AG04449 (cell line): ENCODE measurements at regions of chr6 and their contacts with region 1.

Region 1: DNA sequence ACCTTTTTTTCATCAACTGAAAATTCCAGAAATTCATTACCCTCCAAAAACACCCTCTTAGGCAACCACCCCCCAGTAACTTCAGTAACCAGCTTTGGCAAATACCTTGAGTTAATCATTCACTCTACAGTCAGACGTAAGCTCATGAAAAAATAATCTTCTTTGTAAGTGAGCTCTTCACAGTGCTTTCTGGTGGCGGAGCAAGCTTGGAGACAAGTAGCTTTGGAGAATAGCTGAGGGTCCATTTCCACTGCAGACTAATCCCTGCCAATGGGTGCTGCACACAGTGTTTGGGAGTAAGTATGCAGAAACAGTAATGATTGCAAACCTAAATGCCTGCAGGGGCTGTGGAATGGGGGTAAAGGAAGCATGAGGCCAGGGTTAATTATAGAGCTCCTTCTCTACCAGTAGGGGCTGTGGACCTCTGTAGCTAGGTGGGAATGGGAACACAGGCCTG is 56.8 kb upstream of the HINT3 start:
- DNase-seq: no peak
- H3K4me3 ChIP-seq: no peak overlapping the region
- CTCF ChIP-seq: no peak

Region 2: GRCh38 chr6:125888989-125889656 is 10.6 kb before region 1 on chr6:
- CTCF ChIA-PET with region 1: interaction called, 11 read pairs
- POLR2A ChIA-PET with region 1: no interaction called
- DNase-seq: no peak
- H3K4me3 ChIP-seq: no peak overlapping the region
- CTCF ChIP-seq: peak; percentile 11